Activated CD8-positive, alpha-beta T cell treated with anti-CD3 and anti-CD28 coated beads, Interleukin-2, amount 10 ng/mL, durations not matched to agents 7 days and 5 days (primary cell): ENCODE measurements at regions of chr1 and their contacts with region 1.

Region 1: GRCh38 chr1:9181176-9181906 is 52.4 kb upstream of the GPR157 start:
- DNase-seq: peak; percentile 76
- ATAC-seq: peak; percentile 77
- H3K4me3 Mint-ChIP-seq: peak overlapping the region; percentile 76
- H3K27ac Mint-ChIP-seq: peak overlapping the region; percentile 64
- H3K4me1 Mint-ChIP-seq: peaks cover 37% of the 10 kb centered on the region
- H3K27me3 Mint-ChIP-seq: peaks cover 14% of the 10 kb centered on the region

Region 2: GRCh38 chr1:9196129-9197040 is 15.0 kb after region 1 on chr1:
- CTCF ChIA-PET with region 1: interaction called, 12 read pairs
- POLR2A ChIA-PET with region 1: interaction called, 3 read pairs
- DNase-seq: peak; percentile 69
- ATAC-seq: peak; percentile 45
- H3K4me3 Mint-ChIP-seq: no peak overlapping the region
- H3K27ac Mint-ChIP-seq: no peak overlapping the region
- H3K4me1 Mint-ChIP-seq: peaks cover 11% of the 10 kb centered on the region
- H3K27me3 Mint-ChIP-seq: peaks cover 52% of the 10 kb centered on the region

Region 3: DNA sequence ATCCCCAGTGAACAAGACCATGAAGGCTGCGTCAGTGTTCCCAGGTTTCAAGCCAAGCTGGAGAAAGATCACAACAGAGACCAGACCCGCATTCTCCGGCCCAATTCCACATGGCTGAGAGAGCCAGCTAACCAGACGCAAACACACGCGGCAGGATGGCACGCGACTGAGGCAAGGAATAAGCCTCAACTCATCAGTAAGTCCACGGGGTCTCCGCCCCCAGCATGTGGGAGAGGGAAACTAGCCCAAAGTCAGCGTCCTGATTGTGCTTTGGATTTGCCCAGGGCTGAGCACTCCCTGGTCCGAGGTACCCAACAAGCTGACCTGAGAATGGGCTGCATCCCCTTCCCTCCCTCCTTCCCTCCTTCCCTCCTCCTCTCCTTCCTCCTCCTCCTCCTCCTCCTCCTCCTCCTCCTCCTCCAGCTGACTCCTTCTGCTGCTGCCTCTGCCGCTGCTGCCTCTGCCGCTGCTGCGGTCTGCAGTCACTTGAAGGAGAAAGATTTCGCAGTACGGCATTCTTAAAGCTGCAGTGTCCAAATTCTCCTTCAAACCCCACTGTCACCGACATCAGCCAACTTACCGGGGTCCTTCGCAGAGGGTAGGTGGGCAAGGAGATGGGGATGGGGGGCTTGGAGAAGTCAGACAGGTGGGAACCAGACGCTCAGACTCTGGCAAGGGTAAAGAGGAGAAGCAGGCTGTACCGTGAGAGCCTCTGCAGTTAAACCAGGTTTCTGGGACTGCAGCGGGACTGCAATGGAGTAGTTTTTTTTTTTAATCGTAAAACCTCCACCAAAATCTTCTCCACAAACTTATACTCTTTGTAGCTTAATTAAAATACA is 20.3 kb after region 1 on chr1:
- CTCF ChIA-PET with region 1: interaction called, 12 read pairs
- POLR2A ChIA-PET with region 1: no interaction called
- DNase-seq: peak; percentile 42
- ATAC-seq: no peak
- H3K4me3 Mint-ChIP-seq: peak overlapping the region; percentile 25
- H3K27ac Mint-ChIP-seq: no peak overlapping the region
- H3K4me1 Mint-ChIP-seq: peaks cover 35% of the 10 kb centered on the region
- H3K27me3 Mint-ChIP-seq: peaks cover 82% of the 10 kb centered on the region

Region 4: GRCh38 chr1:9270290-9270883 is 89.0 kb after region 1 on chr1:
- CTCF ChIA-PET with region 1: no interaction called
- POLR2A ChIA-PET with region 1: no interaction called
- DNase-seq: no peak
- ATAC-seq: no peak
- H3K4me3 Mint-ChIP-seq: no peak overlapping the region
- H3K27ac Mint-ChIP-seq: peak overlapping the region; percentile 61
- H3K4me1 Mint-ChIP-seq: peaks cover 23% of the 10 kb centered on the region
- H3K27me3 Mint-ChIP-seq: no peaks in the 10 kb centered on the region